GM12878 (cell line): ENCODE measurements at regions of chr17 and their contacts with region 1.

Region 1: DNA sequence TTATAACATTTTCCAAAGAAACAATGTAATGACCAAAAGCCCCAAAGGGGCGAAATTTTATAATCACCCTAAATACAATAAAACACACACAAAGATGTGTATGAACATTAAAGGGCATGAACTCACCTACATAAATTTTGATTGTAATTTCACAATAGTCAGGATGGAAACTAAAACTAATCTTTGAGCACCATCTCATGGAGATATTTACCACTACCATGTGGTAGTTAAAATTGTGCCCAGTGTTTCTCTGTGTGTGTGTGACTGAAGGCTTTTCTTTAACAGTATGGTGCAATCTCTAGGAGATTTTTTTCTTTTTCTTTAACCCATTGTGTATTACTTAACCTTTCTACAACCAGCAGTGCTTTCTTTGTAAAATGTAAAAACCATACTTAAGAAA is 19.7 kb upstream of the MEIOC start:
- DNase-seq: no peak
- ATAC-seq: peak; percentile 46; the same call in 2 of the 3 replicates
- H3K4me3 ChIP-seq: no peak overlapping the region
- H3K27ac ChIP-seq: no peak overlapping the region
- H3K4me1 ChIP-seq: no peaks in the 10 kb centered on the region
- H3K27me3 ChIP-seq: no peaks in the 10 kb centered on the region; a peak in 2 of 4 replicates
- CTCF ChIP-seq: peak in 2 of 3 experiments; percentile 21 to 45; a peak in 3 of 6 replicates
- EP300 ChIP-seq: no peak
- POLR2A ChIP-seq: no peak
- RAD21 ChIP-seq: peak; percentile 51

Region 2: DNA sequence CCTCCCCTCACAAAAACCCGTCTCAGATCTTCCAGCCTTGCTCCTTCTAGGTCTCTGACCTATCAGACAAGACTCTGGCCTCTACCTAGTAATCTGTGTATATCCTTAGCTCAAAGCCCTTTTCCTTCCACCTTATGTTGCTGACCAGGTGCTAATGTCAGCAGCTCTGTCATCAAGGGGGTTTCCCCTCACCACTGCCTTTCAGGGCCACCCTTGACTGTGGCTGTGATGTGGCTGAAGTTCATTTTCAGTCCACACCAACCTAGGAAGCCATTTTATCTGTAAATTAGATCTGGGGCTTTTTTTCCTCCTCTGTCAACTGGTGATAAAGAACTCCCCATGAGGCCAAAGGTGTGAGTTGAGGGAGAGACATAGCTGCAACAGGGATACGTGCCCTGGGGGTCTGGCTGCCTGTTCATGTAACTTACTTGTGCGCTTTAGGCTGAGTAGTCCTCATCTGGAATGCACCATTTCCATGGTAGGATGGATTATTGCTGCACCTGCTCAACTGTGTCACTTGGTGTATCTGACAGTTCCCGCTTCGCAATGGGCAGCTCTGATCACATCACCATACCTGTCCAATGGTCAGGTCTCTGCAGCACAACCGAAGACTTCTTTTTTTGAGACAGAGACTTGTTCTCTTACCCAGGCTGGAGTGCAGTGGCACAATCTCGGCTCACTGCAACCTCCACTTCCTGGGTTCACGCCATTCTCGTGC is 342.9 kb before region 1 on chr17:
- CTCF ChIA-PET with region 1: no interaction called
- POLR2A ChIA-PET with region 1: interaction called, 11 read pairs
- RAD21 ChIA-PET with region 1: no interaction called
- SMC1A ChIA-PET with region 1: no interaction called
- in situ Hi-C with region 1: no loop called
- intact Hi-C with region 1: no loop called
- DNase-seq: peak; percentile 9
- ATAC-seq: peak; percentile 93
- H3K4me3 ChIP-seq: no peak overlapping the region
- H3K27ac ChIP-seq: no peak overlapping the region
- H3K4me1 ChIP-seq: no peaks in the 10 kb centered on the region; the same call in 1 of the 2 replicates
- H3K27me3 ChIP-seq: peaks cover 0 to 3% of the 10 kb centered on the region in 2 experiments; a peak in 1 of 4 replicates
- CTCF ChIP-seq: no peak
- EP300 ChIP-seq: no peak
- POLR2A ChIP-seq: no peak
- RAD21 ChIP-seq: no peak

Region 3: GRCh38 chr17:44599298-44600175 is 37.0 kb before region 1 on chr17:
- CTCF ChIA-PET with region 1: no interaction called
- POLR2A ChIA-PET with region 1: no interaction called
- RAD21 ChIA-PET with region 1: no interaction called
- SMC1A ChIA-PET with region 1: no interaction called
- in situ Hi-C with region 1: no loop called
- intact Hi-C with region 1: no loop called
- DNase-seq: no peak
- ATAC-seq: no peak
- H3K4me3 ChIP-seq: no peak overlapping the region
- H3K27ac ChIP-seq: no peak overlapping the region
- H3K4me1 ChIP-seq: no peaks in the 10 kb centered on the region
- H3K27me3 ChIP-seq: no peaks in the 10 kb centered on the region
- CTCF ChIP-seq: no peak
- EP300 ChIP-seq: no peak
- POLR2A ChIP-seq: no peak
- RAD21 ChIP-seq: no peak